ENCODE measurements at regions of chr19 and their contacts with region 1.

Region 1: DNA sequence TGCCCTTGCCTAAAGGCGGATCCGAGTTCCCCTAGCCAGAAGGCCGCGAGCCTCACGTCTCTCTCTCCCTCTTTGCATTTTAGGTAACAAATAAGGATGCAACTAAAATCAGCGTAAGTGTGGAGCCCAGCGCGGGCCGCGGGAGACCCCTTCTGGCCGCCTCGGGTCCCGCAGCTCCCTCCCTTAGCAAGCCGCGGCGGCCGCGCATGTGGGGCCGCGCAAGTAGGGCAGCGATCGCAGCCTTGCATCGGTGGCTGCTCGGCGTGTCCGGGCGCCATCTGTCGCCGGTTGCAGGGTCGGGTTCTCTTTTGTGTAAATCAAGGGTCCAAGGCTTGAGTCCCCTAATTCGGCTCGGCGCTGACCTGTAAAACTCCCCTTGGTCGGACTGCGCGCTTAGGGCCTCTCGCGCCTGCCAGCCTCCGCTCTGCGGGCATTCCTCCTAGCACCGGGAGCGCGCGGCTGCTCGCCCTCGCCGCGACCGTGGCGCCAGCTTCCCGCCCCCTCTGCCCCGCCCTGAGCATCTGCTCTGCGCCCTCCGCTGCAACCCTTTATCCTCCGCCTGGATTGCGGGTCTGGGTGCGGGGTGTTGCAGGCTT is 2.7 kb downstream of the VSTM2B start:
- DNase-seq: peak in 6 of 9 donors; percentile 8 to 72 (median 25)
- ATAC-seq: peak; percentile 68
- H3K4me3 ChIP-seq: peak overlapping the region; percentile 30
- H3K4me3 Mint-ChIP-seq: peak overlapping the region; percentile 39 to 87 (median 68)
- H3K27ac ChIP-seq: no peak overlapping the region
- H3K27ac Mint-ChIP-seq: peak overlapping the region in 1 of 9 donors; percentile 35
- H3K4me1 ChIP-seq: peaks cover 5 to 8% of the 10 kb centered on the region in 2 donors
- H3K4me1 Mint-ChIP-seq: peaks cover 18 to 33% (median 23%) of the 10 kb centered on the region in 7 donors
- H3K27me3 ChIP-seq: peaks cover 4 to 14% of the 10 kb centered on the region in 2 donors
- H3K27me3 Mint-ChIP-seq: peaks cover 51 to 73% (median 61%) of the 10 kb centered on the region in 5 donors

Region 2: GRCh38 chr19:28296506-28296905 is 1231.9 kb before region 1 on chr19:
- CTCF ChIA-PET with region 1: no interaction called
- POLR2A ChIA-PET with region 1: no interaction called
- intact Hi-C with region 1: no loop called
- DNase-seq: no peak
- ATAC-seq: no peak
- H3K4me3 ChIP-seq: no peak overlapping the region
- H3K4me3 Mint-ChIP-seq: no peak overlapping the region
- H3K27ac ChIP-seq: no peak overlapping the region
- H3K27ac Mint-ChIP-seq: no peak overlapping the region
- H3K4me1 ChIP-seq: no peaks in the 10 kb centered on the region
- H3K4me1 Mint-ChIP-seq: no peaks in the 10 kb centered on the region
- H3K27me3 ChIP-seq: no peaks in the 10 kb centered on the region
- H3K27me3 Mint-ChIP-seq: peaks cover 0 to 4% (median 0%) of the 10 kb centered on the region in 5 donors

Region 3: DNA sequence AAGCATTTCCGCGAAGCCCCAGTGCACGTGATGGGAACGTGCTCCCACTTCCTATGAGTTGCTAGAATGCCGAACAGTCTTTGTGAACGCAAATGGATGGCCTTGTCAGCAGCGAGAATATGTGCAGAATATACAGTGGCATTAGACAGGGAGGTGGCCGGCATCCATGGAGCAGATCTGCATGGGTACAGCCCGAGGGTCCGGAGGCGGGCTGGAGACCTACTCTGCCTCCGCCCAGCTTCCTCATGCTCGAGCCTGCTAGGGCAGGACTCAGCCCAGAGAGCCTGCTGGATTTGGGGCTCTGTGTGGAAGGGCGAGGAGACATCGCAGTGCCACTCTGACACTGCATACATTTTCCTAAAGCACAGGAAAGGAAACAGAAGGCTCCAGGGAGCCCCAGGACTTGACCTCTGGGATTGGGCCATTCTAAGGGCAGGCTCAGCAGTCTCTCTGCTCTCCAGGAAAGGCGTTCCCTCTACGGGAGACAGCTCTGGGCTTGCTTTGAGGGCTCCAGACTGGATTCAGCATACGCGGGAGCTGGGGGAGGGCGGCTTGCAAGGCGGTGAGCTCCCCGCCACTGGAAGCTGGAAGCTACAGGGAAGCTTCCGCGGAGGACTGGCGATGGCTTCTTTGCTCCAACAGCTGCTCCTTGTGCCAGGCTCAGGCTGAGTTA is 259.6 kb before region 1 on chr19:
- CTCF ChIA-PET with region 1: no interaction called
- POLR2A ChIA-PET with region 1: no interaction called
- intact Hi-C with region 1: no loop called
- DNase-seq: no peak
- ATAC-seq: no peak
- H3K4me3 ChIP-seq: no peak overlapping the region
- H3K4me3 Mint-ChIP-seq: no peak overlapping the region
- H3K27ac ChIP-seq: no peak overlapping the region
- H3K27ac Mint-ChIP-seq: no peak overlapping the region
- H3K4me1 ChIP-seq: no peaks in the 10 kb centered on the region
- H3K4me1 Mint-ChIP-seq: peaks cover 0 to 5% (median 0%) of the 10 kb centered on the region in 7 donors
- H3K27me3 ChIP-seq: no peaks in the 10 kb centered on the region
- H3K27me3 Mint-ChIP-seq: peaks cover 5 to 45% (median 30%) of the 10 kb centered on the region in 5 donors

Region 4: GRCh38 chr19:29467824-29468401 is 60.5 kb before region 1 on chr19:
- CTCF ChIA-PET with region 1: no interaction called
- POLR2A ChIA-PET with region 1: no interaction called
- intact Hi-C with region 1: loop called in 1 of 2 experiments (anchors 5 kb)
- DNase-seq: peak in 2 of 9 donors; percentile 0 to 13
- ATAC-seq: no peak
- H3K4me3 ChIP-seq: no peak overlapping the region
- H3K4me3 Mint-ChIP-seq: no peak overlapping the region
- H3K27ac ChIP-seq: no peak overlapping the region
- H3K27ac Mint-ChIP-seq: no peak overlapping the region
- H3K4me1 ChIP-seq: no peaks in the 10 kb centered on the region
- H3K4me1 Mint-ChIP-seq: peaks cover 0 to 5% (median 0%) of the 10 kb centered on the region in 7 donors
- H3K27me3 ChIP-seq: no peaks in the 10 kb centered on the region
- H3K27me3 Mint-ChIP-seq: peaks cover 13 to 44% (median 24%) of the 10 kb centered on the region in 5 donors

Region 5: GRCh38 chr19:29587518-29587986 is 59.1 kb after region 1 on chr19:
- CTCF ChIA-PET with region 1: no interaction called
- POLR2A ChIA-PET with region 1: no interaction called
- intact Hi-C with region 1: loop called in 1 of 2 experiments (anchors 5 kb)
- DNase-seq: peak in 1 of 9 donors; percentile 69
- ATAC-seq: peak; percentile 92
- H3K4me3 ChIP-seq: no peak overlapping the region
- H3K4me3 Mint-ChIP-seq: peak overlapping the region in 1 of 10 donors; percentile 32
- H3K27ac ChIP-seq: no peak overlapping the region
- H3K27ac Mint-ChIP-seq: peak overlapping the region in 3 of 9 donors; percentile 4 to 88 (median 6)
- H3K4me1 ChIP-seq: peaks cover 0 to 9% of the 10 kb centered on the region in 2 donors
- H3K4me1 Mint-ChIP-seq: peaks cover 0 to 33% (median 0%) of the 10 kb centered on the region in 7 donors
- H3K27me3 ChIP-seq: no peaks in the 10 kb centered on the region
- H3K27me3 Mint-ChIP-seq: peaks cover 22 to 45% (median 38%) of the 10 kb centered on the region in 5 donors

Region 6: GRCh38 chr19:29694669-29695627 is 166.5 kb after region 1 on chr19:
- CTCF ChIA-PET with region 1: no interaction called
- POLR2A ChIA-PET with region 1: no interaction called
- intact Hi-C with region 1: loop called in 1 of 2 experiments (anchors 5 kb)
- DNase-seq: peak; percentile 70 to 86 (median 78)
- ATAC-seq: peak; percentile 98
- H3K4me3 ChIP-seq: no peak overlapping the region
- H3K4me3 Mint-ChIP-seq: peak overlapping the region in 2 of 10 donors; percentile 14 to 36
- H3K27ac ChIP-seq: no peak overlapping the region
- H3K27ac Mint-ChIP-seq: peak overlapping the region; percentile 63 to 87 (median 81)
- H3K4me1 ChIP-seq: peaks cover 0 to 16% of the 10 kb centered on the region in 2 donors
- H3K4me1 Mint-ChIP-seq: peaks cover 9 to 29% (median 17%) of the 10 kb centered on the region in 7 donors
- H3K27me3 ChIP-seq: no peaks in the 10 kb centered on the region
- H3K27me3 Mint-ChIP-seq: no peaks in the 10 kb centered on the region

Region 7: DNA sequence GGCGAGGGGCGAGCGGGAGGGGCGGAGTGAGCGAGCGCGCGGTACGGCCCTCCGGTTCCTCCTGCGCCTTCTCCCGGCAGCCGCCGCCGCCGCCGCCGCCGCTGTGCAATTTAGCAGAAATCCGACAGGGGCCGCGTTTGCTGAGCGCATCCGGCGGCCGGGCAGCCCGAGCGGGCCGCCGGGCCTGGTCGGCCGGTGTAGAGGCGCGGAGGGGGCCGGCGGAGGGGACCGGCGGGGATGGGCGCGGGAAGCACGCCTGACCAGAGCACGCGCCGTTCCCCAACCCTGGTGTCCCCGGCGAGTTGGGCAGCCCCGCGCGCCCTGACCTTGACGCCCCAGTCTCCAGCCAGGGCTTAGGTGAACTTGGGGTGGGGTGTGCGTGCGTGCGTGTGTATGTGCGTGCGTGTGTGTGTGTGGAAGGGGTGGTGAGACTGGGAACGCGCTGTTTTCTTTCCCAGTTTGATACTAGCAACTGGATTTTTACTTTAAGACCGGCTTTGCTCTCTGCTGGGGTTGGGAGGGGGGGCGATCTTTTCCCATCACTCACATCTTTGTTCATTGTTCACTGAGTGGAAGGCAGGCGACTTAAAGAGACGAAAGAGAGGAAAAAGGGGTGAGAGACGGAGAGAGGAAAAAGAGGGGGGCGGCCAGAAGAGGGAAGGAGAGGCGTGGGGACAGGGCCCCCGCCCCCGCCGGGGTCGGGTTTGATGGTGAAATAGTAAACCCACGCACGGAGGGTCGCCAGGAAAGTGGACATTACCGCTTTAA is 699.4 kb after region 1 on chr19:
- CTCF ChIA-PET with region 1: no interaction called
- POLR2A ChIA-PET with region 1: no interaction called
- intact Hi-C with region 1: loop called in 1 of 2 experiments (anchors 5 kb)
- DNase-seq: peak in 2 of 9 donors; percentile 10 to 70
- ATAC-seq: peak; percentile 10
- H3K4me3 ChIP-seq: no peak overlapping the region
- H3K4me3 Mint-ChIP-seq: peak overlapping the region in 9 of 10 donors; percentile 45 to 92 (median 82)
- H3K27ac ChIP-seq: no peak overlapping the region
- H3K27ac Mint-ChIP-seq: peak overlapping the region in 1 of 9 donors; percentile 23
- H3K4me1 ChIP-seq: peaks cover 4 to 6% of the 10 kb centered on the region in 2 donors
- H3K4me1 Mint-ChIP-seq: peaks cover 19 to 42% (median 33%) of the 10 kb centered on the region in 7 donors
- H3K27me3 ChIP-seq: peaks cover 0 to 14% of the 10 kb centered on the region in 2 donors
- H3K27me3 Mint-ChIP-seq: peaks cover 61 to 83% (median 74%) of the 10 kb centered on the region in 5 donors

Region 8: DNA sequence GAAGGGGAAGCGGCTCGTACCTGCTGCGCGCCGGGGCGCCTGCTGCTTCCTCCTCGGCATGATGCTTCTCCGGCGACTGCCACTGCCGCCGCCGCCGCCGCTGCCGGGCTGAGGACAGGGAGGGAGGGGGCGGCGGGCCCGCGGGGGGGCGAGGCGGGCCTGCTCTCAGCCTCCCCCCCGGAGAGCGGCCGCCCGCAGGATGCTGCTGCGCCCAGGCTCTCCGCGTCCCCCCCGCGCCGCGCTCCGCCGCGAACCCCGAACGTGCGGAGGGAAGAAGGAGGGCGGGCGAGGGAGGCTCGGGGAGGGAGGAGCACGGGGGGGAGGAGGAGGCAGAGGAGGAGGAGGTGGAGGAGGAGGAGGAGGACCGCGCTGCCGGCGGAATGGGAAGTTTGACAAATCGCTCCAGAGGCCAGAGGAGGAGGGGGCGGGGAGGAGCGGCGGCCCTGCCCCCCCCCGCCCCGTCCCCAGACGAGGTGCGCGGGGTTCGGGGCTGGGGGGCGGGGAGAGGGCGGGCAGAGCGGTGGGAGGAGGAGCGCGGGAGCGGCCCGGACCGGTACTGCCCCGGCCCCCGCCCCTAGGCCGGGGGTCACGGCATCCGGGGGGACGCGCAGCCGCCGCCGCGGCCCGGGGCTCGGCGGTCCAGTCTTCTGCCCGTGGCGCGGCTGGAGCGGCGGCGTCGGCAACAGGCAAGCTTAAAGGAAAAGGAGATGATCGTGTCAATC is 1820.9 kb after region 1 on chr19 and contains the start of gene TSHZ3:
- CTCF ChIA-PET with region 1: no interaction called
- POLR2A ChIA-PET with region 1: no interaction called
- intact Hi-C with region 1: loop called in 1 of 2 experiments (anchors 5 kb)
- DNase-seq: peak in 6 of 9 donors; percentile 32 to 66 (median 46)
- ATAC-seq: peak; percentile 66
- H3K4me3 ChIP-seq: peak within 1 kb of the TSS; percentile 57
- H3K4me3 Mint-ChIP-seq: peak within 1 kb of the TSS; percentile 71 to 93 (median 84)
- H3K27ac ChIP-seq: no peak within 1 kb of the TSS
- H3K27ac Mint-ChIP-seq: peak within 1 kb of the TSS in 1 of 9 donors; percentile 23
- H3K4me1 ChIP-seq: peaks cover 19 to 22% of the 10 kb centered on the region in 2 donors
- H3K4me1 Mint-ChIP-seq: peaks cover 28 to 40% (median 35%) of the 10 kb centered on the region in 7 donors
- H3K27me3 ChIP-seq: peaks cover 30 to 36% of the 10 kb centered on the region in 2 donors
- H3K27me3 Mint-ChIP-seq: peaks cover 51 to 75% (median 61%) of the 10 kb centered on the region in 5 donors
- total RNA-seq, gene TSHZ3: 0.08 to 6.0 (median 0.19) TPM